ENCODE measurements at regions of chr3 and their contacts with region 1.

Region 1: GRCh38 chr3:107927361-107928083 is 163.3 kb downstream of the CD47 start:
- DNase-seq: no peak
- H3K4me3 ChIP-seq: peak overlapping the region; percentile 67
- CTCF ChIP-seq: peak; percentile 96

Region 2: DNA sequence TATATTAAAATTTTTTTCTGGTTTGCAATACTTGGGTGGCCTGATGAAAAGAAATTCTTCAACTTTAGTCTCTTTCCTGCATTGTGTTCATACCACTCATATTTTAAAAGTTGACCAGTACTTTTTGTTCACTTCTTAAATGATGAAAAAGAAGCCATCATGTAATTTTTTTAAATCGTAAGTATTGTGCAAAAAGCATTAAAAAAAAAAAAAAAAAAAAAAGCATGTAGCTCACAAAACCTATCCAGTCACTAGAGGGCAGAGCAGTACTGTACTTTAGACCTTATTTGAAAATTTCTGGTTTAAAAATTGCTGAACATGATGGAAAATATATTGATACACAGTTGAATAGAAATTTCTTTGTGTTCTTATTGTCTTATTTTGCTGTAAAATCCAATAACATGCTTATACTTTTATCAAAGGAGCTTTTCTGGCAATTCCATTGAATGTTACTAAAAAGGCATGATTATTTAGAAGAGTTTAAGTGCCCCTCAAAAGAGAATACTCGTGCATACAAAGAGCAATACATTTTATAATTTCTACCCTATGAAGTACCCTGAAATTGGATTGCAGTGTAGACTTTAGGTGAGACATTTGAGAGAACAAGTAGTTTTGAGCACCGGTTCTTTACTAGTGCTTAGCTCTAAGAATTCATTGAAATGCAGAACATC is 267.1 kb before region 1 on chr3:
- CTCF ChIA-PET with region 1: interaction called, 25 read pairs
- POLR2A ChIA-PET with region 1: no interaction called
- DNase-seq: peak; percentile 53
- H3K4me3 ChIP-seq: no peak overlapping the region
- CTCF ChIP-seq: peak; percentile 37

Region 3: GRCh38 chr3:107781253-107781652 is 146.3 kb before region 1 on chr3:
- CTCF ChIA-PET with region 1: no interaction called
- POLR2A ChIA-PET with region 1: no interaction called
- DNase-seq: no peak
- H3K4me3 ChIP-seq: no peak overlapping the region
- CTCF ChIP-seq: no peak

Region 4: GRCh38 chr3:107846279-107846852 is 81.2 kb before region 1 on chr3:
- CTCF ChIA-PET with region 1: interaction called, 11 read pairs
- POLR2A ChIA-PET with region 1: no interaction called
- DNase-seq: no peak
- H3K4me3 ChIP-seq: no peak overlapping the region
- CTCF ChIP-seq: peak; percentile 82

Region 5: GRCh38 chr3:107910713-107911259 is 16.7 kb before region 1 on chr3:
- CTCF ChIA-PET with region 1: interaction called, 26 read pairs
- POLR2A ChIA-PET with region 1: no interaction called
- DNase-seq: no peak
- H3K4me3 ChIP-seq: no peak overlapping the region
- CTCF ChIP-seq: no peak

Region 6: GRCh38 chr3:107938143-107938542 is 10.6 kb after region 1 on chr3:
- CTCF ChIA-PET with region 1: interaction called, 80 read pairs
- POLR2A ChIA-PET with region 1: no interaction called
- DNase-seq: no peak
- H3K4me3 ChIP-seq: no peak overlapping the region
- CTCF ChIP-seq: no peak

Region 7: GRCh38 chr3:108153451-108153981 is 226.0 kb after region 1 on chr3:
- CTCF ChIA-PET with region 1: interaction called, 10 read pairs
- POLR2A ChIA-PET with region 1: no interaction called
- DNase-seq: no peak
- H3K4me3 ChIP-seq: no peak overlapping the region
- CTCF ChIP-seq: peak; percentile 33